ENCODE measurements at regions of chr7 and their contacts with region 1.

Region 1: GRCh38 chr7:105013221-105013815 is 687 bp upstream of the KMT2E start:
- DNase-seq: peak; percentile 90 to 98 (median 96)
- ATAC-seq: peak; percentile 59
- H3K4me3 ChIP-seq: peak overlapping the region; percentile 84
- H3K4me3 Mint-ChIP-seq: peak overlapping the region; percentile 97
- H3K27ac ChIP-seq: peak overlapping the region; percentile 100
- H3K27ac Mint-ChIP-seq: peak overlapping the region; percentile 100
- H3K4me1 ChIP-seq: peaks cover 13% of the 10 kb centered on the region
- H3K4me1 Mint-ChIP-seq: peaks cover 50% of the 10 kb centered on the region
- H3K27me3 ChIP-seq: no peaks in the 10 kb centered on the region
- H3K27me3 Mint-ChIP-seq: peaks cover 13% of the 10 kb centered on the region
- CTCF ChIP-seq: no peak

Region 2: DNA sequence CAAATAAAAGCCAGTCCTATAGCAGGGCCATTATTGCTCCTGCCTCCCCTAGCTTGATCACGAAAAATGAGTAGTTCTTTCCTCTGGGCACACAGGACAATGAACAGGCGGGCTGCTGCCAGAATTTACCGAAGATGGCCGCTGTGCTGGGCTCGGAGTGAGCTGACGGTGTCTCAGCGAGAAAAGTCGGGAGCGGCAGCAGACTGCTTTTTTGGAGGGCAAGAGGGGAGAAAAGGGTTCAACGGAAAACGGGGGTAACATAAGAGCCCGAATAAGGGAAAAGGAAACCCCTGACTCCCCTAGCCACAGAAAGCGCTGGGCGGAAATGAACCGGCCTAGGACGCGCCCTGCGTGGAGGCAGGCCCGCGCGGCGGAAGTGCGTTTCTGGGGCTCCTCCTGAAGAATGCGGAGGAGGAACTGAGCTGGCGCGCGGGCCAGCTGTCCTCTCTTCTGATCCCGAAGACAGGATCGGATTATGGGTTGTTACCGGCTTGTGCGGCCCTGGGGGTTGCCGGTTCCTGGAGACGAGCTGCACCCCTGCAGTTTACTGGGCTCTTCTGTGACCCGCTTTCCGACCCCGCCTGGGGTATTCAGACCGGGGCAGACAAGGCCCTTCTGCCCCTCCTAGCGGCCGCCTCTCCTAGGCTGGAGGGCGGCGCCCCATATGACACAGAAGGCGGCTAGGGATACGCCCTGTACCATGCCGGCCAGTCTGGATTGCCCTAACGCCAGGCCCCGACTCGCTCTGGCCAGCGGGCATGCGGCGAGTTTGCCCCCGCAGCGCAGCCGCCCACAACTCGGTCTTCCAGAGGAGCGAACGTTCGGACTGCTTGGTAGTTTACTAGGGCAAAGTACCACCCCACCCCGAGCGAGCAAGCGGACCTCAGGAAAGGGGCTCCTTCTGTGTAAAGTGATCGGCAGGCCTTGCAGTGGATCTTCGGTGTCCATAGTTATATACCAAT is 29.5 kb before region 1 on chr7:
- CTCF ChIA-PET with region 1: interaction called, 159 read pairs
- POLR2A ChIA-PET with region 1: interaction called, 560 read pairs
- intact Hi-C with region 1: loop called (anchors 1 kb)
- DNase-seq: peak; percentile 69 to 91 (median 78)
- ATAC-seq: peak; percentile 82
- H3K4me3 ChIP-seq: peak overlapping the region; percentile 80
- H3K4me3 Mint-ChIP-seq: peak overlapping the region; percentile 100
- H3K27ac ChIP-seq: peak overlapping the region; percentile 96 to 98
- H3K27ac Mint-ChIP-seq: peak overlapping the region; percentile 99
- H3K4me1 ChIP-seq: peaks cover 26% of the 10 kb centered on the region
- H3K4me1 Mint-ChIP-seq: peaks cover 63% of the 10 kb centered on the region
- H3K27me3 ChIP-seq: no peaks in the 10 kb centered on the region
- H3K27me3 Mint-ChIP-seq: no peaks in the 10 kb centered on the region
- CTCF ChIP-seq: peak; percentile 54

Region 3: GRCh38 chr7:105030447-105030846 is 17.1 kb after region 1 on chr7:
- CTCF ChIA-PET with region 1: interaction called, 4 read pairs
- POLR2A ChIA-PET with region 1: interaction called, 72 read pairs
- intact Hi-C with region 1: loop called (anchors 2 kb)
- DNase-seq: no peak
- ATAC-seq: no peak
- H3K4me3 ChIP-seq: no peak overlapping the region
- H3K4me3 Mint-ChIP-seq: peak overlapping the region; percentile 7
- H3K27ac ChIP-seq: no peak overlapping the region
- H3K27ac Mint-ChIP-seq: peak overlapping the region; percentile 0
- H3K4me1 ChIP-seq: peaks cover 51% of the 10 kb centered on the region
- H3K4me1 Mint-ChIP-seq: peaks cover 82% of the 10 kb centered on the region
- H3K27me3 ChIP-seq: no peaks in the 10 kb centered on the region
- H3K27me3 Mint-ChIP-seq: no peaks in the 10 kb centered on the region
- CTCF ChIP-seq: no peak

Region 4: DNA sequence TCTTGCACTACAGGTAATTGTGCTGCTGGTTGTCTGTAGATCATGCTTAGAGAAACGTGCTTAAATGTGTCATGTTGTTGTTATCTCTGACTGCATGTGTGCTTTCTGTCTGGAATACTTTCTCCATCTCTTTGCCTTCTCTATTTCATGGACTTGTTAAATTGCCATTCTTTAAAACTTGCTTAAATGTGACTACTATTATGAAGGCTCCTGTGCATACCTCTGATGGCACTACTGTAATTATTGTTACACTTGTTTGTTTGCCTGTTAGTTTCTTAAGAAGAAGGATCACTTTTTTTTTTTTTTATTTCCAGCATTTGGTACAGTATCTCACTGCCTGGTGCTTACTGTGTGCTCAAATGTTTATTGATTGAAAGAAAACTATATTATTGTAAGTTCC is 42.3 kb after region 1 on chr7:
- CTCF ChIA-PET with region 1: interaction called, 4 read pairs
- POLR2A ChIA-PET with region 1: interaction called, 20 read pairs
- intact Hi-C with region 1: loop called (anchors 5 kb)
- DNase-seq: no peak
- ATAC-seq: peak; percentile 38
- H3K4me3 ChIP-seq: no peak overlapping the region
- H3K4me3 Mint-ChIP-seq: no peak overlapping the region
- H3K27ac ChIP-seq: no peak overlapping the region
- H3K27ac Mint-ChIP-seq: peak overlapping the region; percentile 76
- H3K4me1 ChIP-seq: peaks cover 16% of the 10 kb centered on the region
- H3K4me1 Mint-ChIP-seq: peaks cover 93% of the 10 kb centered on the region
- H3K27me3 ChIP-seq: no peaks in the 10 kb centered on the region
- H3K27me3 Mint-ChIP-seq: no peaks in the 10 kb centered on the region
- CTCF ChIP-seq: no peak

Region 5: DNA sequence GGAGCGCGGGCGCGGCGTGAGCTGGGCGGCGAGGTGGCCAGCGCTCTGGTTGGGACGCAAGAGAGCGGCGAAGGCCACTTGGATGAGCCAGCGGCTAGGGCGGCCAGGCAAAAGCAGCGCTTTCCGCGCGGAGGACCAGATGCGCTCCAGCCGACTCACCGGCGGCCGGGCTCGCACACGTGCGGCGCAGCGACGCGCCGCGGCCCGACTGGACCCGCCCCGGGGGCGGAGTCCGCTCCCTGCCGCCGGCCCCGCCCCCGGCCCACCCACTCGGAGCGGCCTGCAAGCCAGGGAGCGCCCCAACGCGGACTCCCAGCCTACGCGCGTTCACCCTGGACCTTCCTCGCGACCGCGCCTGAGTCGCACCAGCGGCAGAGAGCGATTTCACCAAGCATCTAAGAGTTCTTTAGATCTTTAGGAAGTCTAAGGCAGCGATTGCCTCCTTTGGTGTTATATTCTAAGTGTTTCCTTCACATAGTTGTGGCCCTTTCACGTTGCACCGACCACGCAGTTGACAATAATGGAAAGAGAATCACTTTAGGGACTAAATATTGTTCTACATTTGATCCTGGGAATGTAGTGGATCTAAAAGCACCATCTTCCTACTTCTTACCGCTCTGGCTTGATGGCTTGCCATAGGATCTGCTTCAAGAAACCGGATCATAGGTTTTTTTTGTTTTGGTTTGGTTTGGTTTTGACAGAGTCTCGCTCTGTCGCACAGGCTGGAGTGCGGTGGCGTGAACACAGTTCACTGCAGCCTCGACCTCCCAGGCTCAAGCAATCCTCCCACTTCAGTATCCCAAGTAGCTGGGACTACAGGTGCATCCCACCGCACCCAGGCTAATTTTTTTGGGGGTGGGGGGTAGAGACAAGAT is 509.0 kb after region 1 on chr7 and contains the start of gene PUS7:
- CTCF ChIA-PET with region 1: no interaction called
- POLR2A ChIA-PET with region 1: no interaction called
- intact Hi-C with region 1: loop called in 1 of 2 experiments (anchors 1 kb)
- DNase-seq: peak; percentile 61 to 92 (median 76)
- ATAC-seq: peak; percentile 94
- H3K4me3 ChIP-seq: peak within 1 kb of the TSS; percentile 57
- H3K4me3 Mint-ChIP-seq: peak within 1 kb of the TSS; percentile 98
- H3K27ac ChIP-seq: peak within 1 kb of the TSS; percentile 21 to 67
- H3K27ac Mint-ChIP-seq: peak within 1 kb of the TSS; percentile 85
- H3K4me1 ChIP-seq: peaks cover 18% of the 10 kb centered on the region
- H3K4me1 Mint-ChIP-seq: peaks cover 15% of the 10 kb centered on the region
- H3K27me3 ChIP-seq: no peaks in the 10 kb centered on the region
- H3K27me3 Mint-ChIP-seq: no peaks in the 10 kb centered on the region
- CTCF ChIP-seq: no peak
- total RNA-seq, gene PUS7: 2.7 TPM

Measured in CD4-positive, alpha-beta T cell (primary cell).